Heart right ventricle (tissue), 16 donors: ENCODE measurements at regions of chr11 and their contacts with region 1.

Region 1: DNA sequence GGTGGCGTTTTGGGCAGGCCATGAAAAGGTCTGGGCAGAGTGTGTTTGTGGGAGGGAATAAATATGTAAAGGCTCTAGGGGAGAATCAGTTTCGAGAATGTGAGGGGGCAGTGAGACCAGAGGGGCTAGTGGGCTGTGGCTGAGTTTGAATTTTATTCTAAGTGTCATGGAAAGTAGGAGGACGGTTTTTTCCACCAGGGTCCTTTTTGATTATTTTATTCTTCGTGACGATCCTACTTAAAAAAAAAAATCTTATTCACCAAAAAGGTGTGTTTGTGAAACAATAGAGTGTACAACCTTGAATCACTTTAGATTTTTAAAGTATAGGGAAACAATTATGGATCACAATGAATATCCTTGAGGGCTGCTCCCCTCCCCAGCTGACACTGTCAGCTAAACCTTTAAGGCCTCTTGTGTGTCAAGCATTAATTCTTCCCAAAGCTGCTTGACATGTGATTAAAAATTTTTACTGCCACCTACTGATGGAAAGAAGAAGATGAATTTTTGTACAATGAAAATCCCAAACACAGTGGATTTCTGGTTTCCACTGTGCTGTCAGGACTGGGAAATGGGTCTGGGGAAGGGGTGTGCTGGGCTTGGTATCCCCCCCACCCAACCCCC is 107.5 kb upstream of the OR4B1 start:
- DNase-seq: no peak
- ATAC-seq: peak; percentile 25 to 56 (median 46)
- H3K4me3 ChIP-seq: peak overlapping the region in 6 of 10 donors; percentile 22 to 39 (median 35)
- H3K27ac ChIP-seq: peak overlapping the region in 1 of 10 donors; percentile 67
- H3K4me1 ChIP-seq: peaks cover 4 to 70% (median 22%) of the 10 kb centered on the region in 9 donors
- H3K27me3 ChIP-seq: no peaks in the 10 kb centered on the region
- CTCF ChIP-seq: peak in 4 of 9 donors; percentile 34 to 55 (median 45)

Region 2: GRCh38 chr11:47932544-47932943 is 176.6 kb before region 1 on chr11:
- intact Hi-C with region 1: loop called (anchors 1 to 5 kb)
- DNase-seq: no peak
- ATAC-seq: no peak
- H3K4me3 ChIP-seq: no peak overlapping the region
- H3K27ac ChIP-seq: no peak overlapping the region
- H3K4me1 ChIP-seq: peaks cover 0 to 27% (median 0%) of the 10 kb centered on the region in 9 donors
- H3K27me3 ChIP-seq: no peaks in the 10 kb centered on the region
- CTCF ChIP-seq: no peak

Region 3: GRCh38 chr11:47938791-47939560 is 170.2 kb before region 1 on chr11:
- intact Hi-C with region 1: loop called (anchors 1 to 5 kb)
- DNase-seq: no peak
- ATAC-seq: no peak
- H3K4me3 ChIP-seq: no peak overlapping the region
- H3K27ac ChIP-seq: no peak overlapping the region
- H3K4me1 ChIP-seq: peaks cover 0 to 33% (median 0%) of the 10 kb centered on the region in 9 donors
- H3K27me3 ChIP-seq: no peaks in the 10 kb centered on the region
- CTCF ChIP-seq: no peak

Region 4: DNA sequence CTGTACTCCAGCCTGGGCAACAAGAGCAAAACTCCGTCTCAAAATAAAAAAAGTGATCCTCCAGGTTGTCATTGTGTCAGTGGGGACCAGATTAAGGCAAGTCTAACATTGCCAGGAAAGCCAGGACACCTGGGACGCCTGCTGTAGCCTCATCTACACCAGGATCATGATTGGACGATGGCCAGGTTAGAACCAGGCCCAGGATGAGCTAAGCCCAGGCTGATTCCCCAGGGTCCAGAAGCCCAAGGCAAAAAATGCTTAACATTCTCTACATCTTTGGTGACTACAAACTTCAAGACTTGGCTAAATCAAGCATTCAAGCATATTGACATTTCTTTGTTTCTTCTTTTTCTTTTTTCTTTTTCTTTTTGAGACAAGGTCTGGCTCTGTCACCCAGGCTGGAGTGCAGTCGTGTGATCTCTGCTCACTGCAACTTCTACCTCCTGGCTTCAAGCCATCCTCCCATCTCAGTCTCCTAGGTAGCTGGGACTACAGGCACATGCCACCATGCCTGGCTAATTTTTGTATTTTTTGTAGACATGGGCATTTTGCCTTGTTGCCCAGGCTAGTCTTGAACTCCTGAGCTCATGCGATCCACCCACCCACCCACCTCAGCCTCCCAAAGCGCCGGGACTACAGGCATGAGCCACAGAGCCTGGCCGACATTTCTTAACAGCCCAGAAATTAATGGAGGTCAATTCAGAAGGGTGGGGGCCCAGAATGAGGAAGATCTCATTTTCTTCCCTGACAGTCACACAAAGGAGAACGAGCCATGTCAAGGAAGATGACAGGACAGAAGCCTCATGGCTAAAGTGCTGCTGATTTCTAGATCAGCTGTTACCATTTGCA is 141.4 kb before region 1 on chr11:
- intact Hi-C with region 1: loop called in 1 of 10 experiments (anchors 10 kb)
- DNase-seq: no peak
- ATAC-seq: no peak
- H3K4me3 ChIP-seq: no peak overlapping the region
- H3K27ac ChIP-seq: no peak overlapping the region
- H3K4me1 ChIP-seq: no peaks in the 10 kb centered on the region
- H3K27me3 ChIP-seq: no peaks in the 10 kb centered on the region
- CTCF ChIP-seq: no peak

Region 5: GRCh38 chr11:47980245-47981049 is 128.7 kb before region 1 on chr11 and contains the start of gene PTPRJ:
- intact Hi-C with region 1: loop called in 4 of 10 experiments (anchors 5 kb)
- DNase-seq: peak; percentile 46 to 59
- ATAC-seq: peak; percentile 59 to 75 (median 68)
- H3K4me3 ChIP-seq: peak within 1 kb of the TSS; percentile 19 to 93 (median 80)
- H3K27ac ChIP-seq: peak within 1 kb of the TSS in 9 of 10 donors; percentile 42 to 96 (median 64)
- H3K4me1 ChIP-seq: peaks cover 7 to 45% (median 13%) of the 10 kb centered on the region in 9 donors
- H3K27me3 ChIP-seq: peaks cover 0 to 14% (median 4%) of the 10 kb centered on the region in 7 donors
- CTCF ChIP-seq: peak in 1 of 9 donors; percentile 3
- total RNA-seq, gene PTPRJ: 5.6 to 22.9 (median 7.5) TPM

Region 6: GRCh38 chr11:47991266-47991830 is 117.8 kb before region 1 on chr11:
- intact Hi-C with region 1: loop called in 1 of 10 experiments (anchors 5 kb)
- DNase-seq: peak in 1 of 2 donors; percentile 25
- ATAC-seq: peak; percentile 67 to 90 (median 82)
- H3K4me3 ChIP-seq: peak overlapping the region in 5 of 10 donors; percentile 8 to 25 (median 11)
- H3K27ac ChIP-seq: peak overlapping the region; percentile 41 to 85 (median 75)
- H3K4me1 ChIP-seq: peaks cover 0 to 88% (median 16%) of the 10 kb centered on the region in 9 donors
- H3K27me3 ChIP-seq: no peaks in the 10 kb centered on the region
- CTCF ChIP-seq: no peak

Region 7: DNA sequence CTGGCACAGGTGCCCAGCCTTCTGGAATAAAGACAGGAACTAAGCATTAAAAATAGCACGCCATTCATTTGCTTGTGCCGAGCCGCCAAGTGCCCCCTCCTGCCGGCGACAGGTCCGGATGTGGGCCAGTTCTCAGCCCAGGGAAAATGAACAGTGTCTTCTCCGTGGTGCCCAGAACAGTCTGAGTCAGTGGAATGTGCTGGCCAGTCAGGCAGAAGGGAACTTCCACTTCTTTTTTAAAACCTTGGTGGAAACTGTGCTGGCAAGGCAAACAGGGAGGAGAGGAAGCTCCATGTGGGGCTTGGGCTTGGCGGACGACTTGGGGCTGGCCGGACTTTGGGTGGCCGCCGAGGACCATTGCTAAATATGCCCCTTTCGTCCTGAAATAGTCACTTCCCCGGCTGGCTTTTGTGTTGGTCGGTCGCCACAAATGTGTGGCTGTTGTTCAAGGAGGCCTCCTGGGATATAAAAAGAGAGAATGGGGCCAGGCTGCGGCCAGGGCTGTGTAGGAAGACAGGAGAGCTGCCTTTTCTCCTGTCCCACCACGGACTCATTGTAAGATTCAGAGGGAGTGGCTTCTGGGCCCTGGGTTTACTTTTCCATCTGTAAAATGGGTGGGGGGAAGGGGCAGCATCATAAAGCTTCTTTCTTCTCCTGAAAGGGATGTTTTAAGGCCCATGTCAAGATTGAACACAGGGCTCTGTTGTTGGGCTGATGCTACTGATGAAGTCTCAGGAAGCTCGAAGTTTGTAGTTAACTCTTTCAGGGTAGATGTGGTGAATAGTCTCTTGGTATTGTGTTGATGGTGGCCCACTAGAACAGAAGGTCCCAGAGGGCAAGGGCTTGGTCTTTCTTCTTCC is 27.8 kb before region 1 on chr11:
- intact Hi-C with region 1: loop called in 1 of 10 experiments (anchors 2 kb)
- DNase-seq: peak; percentile 69 to 76
- ATAC-seq: peak; percentile 94 to 99 (median 96)
- H3K4me3 ChIP-seq: peak overlapping the region in 6 of 10 donors; percentile 14 to 31 (median 28)
- H3K27ac ChIP-seq: peak overlapping the region; percentile 41 to 90 (median 78)
- H3K4me1 ChIP-seq: peaks cover 0 to 54% (median 25%) of the 10 kb centered on the region in 9 donors
- H3K27me3 ChIP-seq: no peaks in the 10 kb centered on the region
- CTCF ChIP-seq: peak in 2 of 9 donors; percentile 5 to 17